ENCODE measurements at regions of chr3 and their contacts with region 1.

Region 1: DNA sequence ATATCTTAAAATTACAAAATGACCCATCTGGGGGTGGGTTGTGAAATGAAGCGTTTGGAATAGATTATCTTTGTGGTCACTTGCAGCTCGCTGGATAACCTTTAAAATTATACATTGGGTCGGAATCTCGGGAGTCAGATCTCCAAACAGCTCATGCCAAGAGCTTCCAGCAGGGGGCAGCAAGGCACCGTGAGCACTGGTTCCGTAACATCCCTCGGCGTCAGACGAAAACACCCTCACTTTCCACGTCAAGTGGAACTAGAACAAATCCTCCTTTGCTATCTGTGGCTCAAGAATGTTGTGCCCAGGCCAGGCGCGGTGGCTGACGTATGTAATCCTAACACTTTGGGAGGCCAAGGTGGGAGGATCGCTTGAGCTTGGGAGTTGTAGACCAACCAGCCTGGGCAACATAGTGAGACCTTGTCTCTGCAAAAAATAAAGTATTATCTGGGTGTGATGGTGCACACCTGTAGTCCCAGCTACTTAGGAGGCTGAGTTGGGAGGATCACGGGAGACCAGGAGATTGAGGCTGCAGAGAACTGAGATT is 31.1 kb downstream of the UMPS start:
- DNase-seq: no peak
- H3K4me3 ChIP-seq: no peak overlapping the region
- H3K27ac ChIP-seq: peak overlapping the region; percentile 64
- H3K4me1 ChIP-seq: peaks cover 20% of the 10 kb centered on the region
- H3K27me3 ChIP-seq: no peaks in the 10 kb centered on the region
- CTCF ChIP-seq: peak; percentile 88 to 99 (median 93)
- POLR2A ChIP-seq: no peak

Region 2: DNA sequence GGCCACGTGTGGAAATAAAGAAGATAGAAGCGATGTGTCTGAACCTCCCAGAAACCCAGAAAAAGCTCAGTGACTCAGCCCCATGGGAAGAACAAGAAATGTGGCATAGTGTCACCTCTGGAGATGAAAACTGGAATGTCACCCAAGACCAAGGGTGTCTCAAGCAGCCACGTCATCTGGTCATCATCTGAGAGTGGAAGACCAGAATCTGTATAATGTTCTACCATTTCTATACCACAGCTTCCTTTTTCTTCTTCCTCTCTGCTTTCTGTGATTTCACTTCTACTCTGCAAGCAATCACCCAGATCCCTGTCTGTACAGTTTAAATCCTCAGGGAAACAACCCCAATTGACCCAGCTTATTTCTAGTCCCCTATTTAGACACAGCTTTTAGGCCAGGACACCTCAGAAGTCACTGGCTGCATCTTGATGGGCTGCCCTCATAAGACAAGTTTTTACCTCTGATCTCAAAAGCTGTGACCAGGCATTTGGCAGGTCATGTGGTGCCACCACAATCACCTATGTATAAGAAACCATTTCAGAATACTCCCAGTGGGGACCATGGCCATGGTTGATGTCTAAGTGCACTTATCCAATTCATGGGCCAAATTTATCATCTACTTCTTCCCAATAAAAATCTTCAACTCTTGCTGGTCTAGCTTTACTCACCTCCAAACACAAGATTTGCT is 309.5 kb before region 1 on chr3:
- intact Hi-C with region 1: no loop called
- DNase-seq: no peak
- H3K4me3 ChIP-seq: no peak overlapping the region
- H3K27ac ChIP-seq: no peak overlapping the region
- H3K4me1 ChIP-seq: no peaks in the 10 kb centered on the region
- H3K27me3 ChIP-seq: no peaks in the 10 kb centered on the region
- CTCF ChIP-seq: no peak
- POLR2A ChIP-seq: no peak

Region 3: DNA sequence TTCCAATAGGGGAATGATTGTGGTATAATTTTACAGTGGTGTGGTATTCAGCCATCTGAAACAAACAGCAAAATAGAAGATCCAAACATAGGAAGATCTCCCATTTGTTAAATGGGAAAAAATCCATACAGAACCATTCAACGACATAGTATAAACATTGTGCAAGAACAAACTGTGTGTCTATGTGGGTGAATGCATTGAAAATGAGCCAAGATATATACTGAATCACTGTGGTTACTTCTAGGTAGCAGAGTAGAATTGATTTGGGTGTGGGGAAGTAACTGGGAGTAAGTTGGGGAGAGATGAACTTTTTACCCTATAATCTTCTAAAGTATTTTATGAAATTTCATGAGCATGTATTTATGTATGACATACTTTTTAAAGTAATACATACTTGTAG is 154.2 kb before region 1 on chr3:
- intact Hi-C with region 1: no loop called
- DNase-seq: no peak
- H3K4me3 ChIP-seq: no peak overlapping the region
- H3K27ac ChIP-seq: no peak overlapping the region
- H3K4me1 ChIP-seq: no peaks in the 10 kb centered on the region
- H3K27me3 ChIP-seq: no peaks in the 10 kb centered on the region
- CTCF ChIP-seq: no peak
- POLR2A ChIP-seq: no peak

Region 4: DNA sequence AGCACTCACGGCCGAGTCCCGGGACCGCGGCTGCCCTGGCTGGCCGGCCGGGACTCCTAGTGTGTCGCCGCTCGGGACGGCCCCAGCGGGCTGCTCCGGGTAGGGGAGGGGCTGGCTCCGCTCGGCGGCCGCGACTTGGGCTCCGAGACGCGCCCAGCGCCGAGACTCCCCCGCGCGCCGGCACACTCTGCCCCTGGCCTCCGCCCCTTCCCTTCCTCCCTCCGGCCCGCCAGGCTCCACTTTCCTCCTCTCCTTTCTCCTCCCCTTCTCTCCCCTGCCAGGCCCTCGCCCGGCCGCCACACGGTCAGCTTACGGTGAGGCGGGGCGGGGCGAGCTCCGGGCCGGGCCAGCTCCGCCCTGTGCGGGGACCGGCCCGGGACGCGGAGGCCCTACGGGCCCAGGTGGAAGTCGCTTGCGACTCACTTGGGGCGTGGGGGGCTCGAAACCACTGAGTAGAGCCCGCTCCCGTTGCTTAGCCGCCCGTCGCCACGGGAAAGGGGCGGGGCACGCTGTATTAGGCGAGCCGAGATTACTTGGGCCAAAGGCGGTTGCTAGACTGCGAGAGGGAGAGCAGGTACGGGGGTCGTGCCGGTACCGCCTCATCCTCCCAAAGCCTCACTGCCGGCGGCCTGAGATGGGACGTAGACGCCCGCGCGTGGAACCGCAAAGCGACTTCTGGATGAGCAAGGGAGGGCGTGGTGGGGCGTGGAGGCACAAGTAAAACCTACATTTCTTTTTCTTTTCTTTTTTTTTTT is 126.0 kb after region 1 on chr3 and contains the start of gene ITGB5:
- intact Hi-C with region 1: no loop called
- DNase-seq: no peak
- H3K4me3 ChIP-seq: peak within 1 kb of the TSS; percentile 84 to 89
- H3K27ac ChIP-seq: peak within 1 kb of the TSS; percentile 95
- H3K4me1 ChIP-seq: peaks cover 47% of the 10 kb centered on the region
- H3K27me3 ChIP-seq: no peaks in the 10 kb centered on the region
- CTCF ChIP-seq: no peak
- POLR2A ChIP-seq: peak in 1 of 2 donors; percentile 60
- total RNA-seq, gene ITGB5: 156 TPM

Region 5: DNA sequence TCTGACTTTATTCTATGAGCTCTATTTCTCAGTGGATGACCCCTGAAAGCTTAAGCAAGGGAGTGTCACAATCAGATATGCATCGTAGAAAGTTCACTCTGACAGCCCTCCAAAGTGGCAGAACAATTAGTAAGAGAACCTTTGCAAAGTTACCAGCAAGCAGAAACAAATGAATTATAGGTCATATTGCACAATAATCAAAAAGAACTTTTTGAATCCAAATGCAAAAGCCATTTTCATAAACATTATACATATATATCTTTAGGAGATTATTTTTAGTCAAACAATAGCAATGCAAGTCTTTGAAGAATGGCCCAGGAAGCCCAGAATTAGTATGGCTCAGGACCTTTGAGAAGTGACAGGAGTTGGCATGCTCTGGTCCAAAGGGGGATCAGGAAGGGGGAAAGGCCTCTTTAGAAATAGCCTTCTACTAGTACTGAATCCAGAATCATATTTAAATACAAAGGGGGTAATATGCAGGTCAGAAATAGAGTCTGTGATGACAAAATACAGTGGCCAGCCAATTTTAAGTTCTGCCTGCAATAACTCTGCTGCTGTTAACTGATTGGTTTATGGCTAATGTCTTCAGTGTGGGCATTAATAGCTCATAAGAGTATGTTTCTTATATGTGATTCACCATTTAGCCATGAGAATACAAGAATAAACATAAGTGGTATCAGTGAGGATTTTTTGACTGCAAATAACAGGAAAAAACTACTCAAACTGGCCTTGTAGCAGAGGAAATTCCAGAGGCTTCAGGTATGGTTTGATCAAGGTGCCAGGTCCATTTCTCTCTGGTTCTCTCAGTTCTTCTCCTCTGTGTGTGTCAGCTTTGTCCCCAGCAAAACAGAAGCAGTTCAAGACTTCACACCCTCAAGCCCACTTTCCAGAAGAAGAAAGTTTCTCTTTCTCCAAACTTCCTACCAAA is 142.8 kb after region 1 on chr3:
- intact Hi-C with region 1: loop called (anchors 5 kb)
- DNase-seq: no peak
- H3K4me3 ChIP-seq: no peak overlapping the region
- H3K27ac ChIP-seq: no peak overlapping the region
- H3K4me1 ChIP-seq: peaks cover 19% of the 10 kb centered on the region
- H3K27me3 ChIP-seq: no peaks in the 10 kb centered on the region
- CTCF ChIP-seq: no peak
- POLR2A ChIP-seq: no peak

Region 6: GRCh38 chr3:124976383-124976782 is 215.1 kb after region 1 on chr3:
- intact Hi-C with region 1: no loop called
- DNase-seq: no peak
- H3K4me3 ChIP-seq: no peak overlapping the region
- H3K27ac ChIP-seq: no peak overlapping the region
- H3K4me1 ChIP-seq: no peaks in the 10 kb centered on the region
- H3K27me3 ChIP-seq: no peaks in the 10 kb centered on the region
- CTCF ChIP-seq: no peak
- POLR2A ChIP-seq: no peak

Measured in vagina (tissue), 2 donors.